IMR-90 (cell line): ENCODE measurements at regions of chr5 and their contacts with region 1.

Region 1: DNA sequence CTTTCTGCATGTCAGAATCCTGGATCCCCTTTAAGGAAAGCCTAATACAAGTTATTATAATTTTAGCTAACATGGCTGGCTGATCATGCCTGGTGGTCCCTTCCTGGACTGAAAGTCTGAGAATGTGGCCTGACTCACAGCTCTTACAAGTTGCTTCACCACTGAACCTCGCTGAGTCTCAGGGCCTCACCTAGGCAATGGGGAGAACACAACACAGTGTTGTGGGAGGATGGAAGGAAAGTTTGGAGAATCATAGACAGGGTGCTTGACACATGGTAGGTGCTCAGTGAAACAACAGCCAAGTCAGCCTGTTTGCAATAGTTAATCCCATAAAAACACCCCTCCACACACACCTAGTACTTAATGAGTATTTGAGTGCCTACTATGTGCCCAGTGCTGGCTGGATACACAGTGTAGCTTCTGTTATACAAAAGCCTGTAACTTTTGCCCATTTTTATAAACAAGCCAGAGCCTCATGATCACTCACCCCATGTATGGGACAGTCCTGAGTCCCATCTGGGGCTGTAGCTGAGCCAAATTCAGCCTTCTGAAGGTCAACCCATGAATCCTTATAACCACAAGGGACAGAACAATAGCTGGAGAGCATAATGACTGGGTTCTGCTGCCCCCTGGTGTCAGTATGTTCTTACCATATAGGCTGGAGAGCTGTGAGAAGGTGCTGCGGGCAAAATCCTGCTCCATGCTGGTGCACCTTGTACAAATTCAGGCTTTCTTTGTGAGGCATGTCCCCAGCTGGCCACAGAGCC is 3.9 kb downstream of the ACSL6 start:
- DNase-seq: peak; percentile 78
- ATAC-seq: peak; percentile 72
- H3K4me3 ChIP-seq: no peak overlapping the region
- H3K27ac ChIP-seq: no peak overlapping the region
- H3K4me1 ChIP-seq: no peaks in the 10 kb centered on the region
- H3K27me3 ChIP-seq: peaks cover 42% of the 10 kb centered on the region
- CTCF ChIP-seq: peak; percentile 71
- POLR2A ChIP-seq: no peak
- RAD21 ChIP-seq: peak; percentile 83

Region 2: DNA sequence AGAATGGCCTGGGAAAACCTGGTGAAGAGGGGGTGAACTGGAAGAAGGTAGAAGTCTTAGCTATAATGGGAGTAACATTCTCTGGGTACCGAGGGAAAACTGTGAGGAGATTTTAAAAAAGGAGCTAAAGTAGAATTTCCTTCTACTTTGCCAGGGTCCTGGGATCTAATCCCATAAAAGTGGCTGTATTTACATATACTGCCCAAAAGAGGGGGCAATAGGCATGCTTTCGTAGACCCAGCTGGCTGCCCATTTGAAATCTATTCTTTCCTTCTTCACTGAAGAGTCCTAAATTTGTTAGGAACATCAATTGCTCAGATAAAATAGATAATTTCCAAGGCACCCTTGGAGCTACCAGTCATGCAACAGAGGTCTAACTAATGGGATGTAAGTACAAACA is 584.5 kb before region 1 on chr5:
- CTCF ChIA-PET with region 1: interaction called, 5 read pairs
- POLR2A ChIA-PET with region 1: no interaction called
- dilution Hi-C with region 1: no loop called
- in situ Hi-C with region 1: loop called (anchors 5 kb)
- intact Hi-C with region 1: loop called (anchors 1 kb)
- DNase-seq: peak; percentile 27
- ATAC-seq: peak; percentile 79
- H3K4me3 ChIP-seq: no peak overlapping the region
- H3K27ac ChIP-seq: no peak overlapping the region
- H3K4me1 ChIP-seq: no peaks in the 10 kb centered on the region
- H3K27me3 ChIP-seq: no peaks in the 10 kb centered on the region
- CTCF ChIP-seq: peak; percentile 54
- POLR2A ChIP-seq: no peak
- RAD21 ChIP-seq: peak; percentile 71

Region 3: DNA sequence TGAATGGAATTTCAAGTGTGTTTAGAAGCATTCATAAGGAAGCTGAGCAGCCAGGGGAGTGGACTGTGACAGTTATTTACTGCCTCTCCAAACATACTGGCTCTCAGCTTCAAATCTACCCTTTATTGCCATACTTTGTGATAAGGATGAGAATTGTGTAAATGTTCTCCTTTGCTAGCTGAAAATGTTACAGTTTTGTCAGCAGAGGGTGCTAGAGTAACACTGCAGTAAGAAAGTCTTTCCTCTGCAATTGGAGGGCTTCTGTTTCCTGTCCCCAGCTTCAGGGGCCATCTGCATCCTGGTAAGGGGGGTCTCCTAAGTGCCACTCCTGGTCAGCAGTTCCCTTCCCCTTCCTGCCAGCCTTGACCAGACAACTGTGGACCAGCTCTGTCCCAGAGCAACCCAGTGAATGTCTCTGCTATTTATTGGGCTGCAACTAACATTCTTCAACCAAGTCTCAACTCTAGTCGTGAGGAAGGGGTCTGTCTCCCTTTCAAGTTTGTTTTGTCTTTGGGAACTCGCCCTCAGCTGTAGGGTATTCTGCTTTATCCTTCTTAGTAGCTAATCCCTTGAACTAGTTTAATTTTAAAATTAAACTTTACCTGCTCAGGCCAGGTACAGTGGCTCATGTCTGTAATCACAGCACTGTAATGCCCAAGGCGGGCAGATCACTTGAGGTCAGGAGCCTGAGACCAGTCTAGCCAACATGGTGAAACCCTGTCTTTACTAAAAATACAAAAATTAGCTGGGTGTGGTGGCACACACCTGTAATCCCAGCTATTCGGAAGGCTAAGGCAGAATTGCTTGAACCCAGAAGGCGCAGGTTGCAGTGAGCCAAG is 417.9 kb before region 1 on chr5:
- CTCF ChIA-PET with region 1: interaction called, 35 read pairs
- POLR2A ChIA-PET with region 1: no interaction called
- dilution Hi-C with region 1: no loop called
- in situ Hi-C with region 1: loop called (anchors 5 kb)
- intact Hi-C with region 1: loop called (anchors 1 kb)
- DNase-seq: peak; percentile 74
- ATAC-seq: peak; percentile 87
- H3K4me3 ChIP-seq: no peak overlapping the region
- H3K27ac ChIP-seq: no peak overlapping the region
- H3K4me1 ChIP-seq: peaks cover 6% of the 10 kb centered on the region
- H3K27me3 ChIP-seq: no peaks in the 10 kb centered on the region
- CTCF ChIP-seq: peak; percentile 90
- POLR2A ChIP-seq: peak; percentile 41; the same call in 1 of the 2 replicates
- RAD21 ChIP-seq: peak; percentile 93

Region 4: DNA sequence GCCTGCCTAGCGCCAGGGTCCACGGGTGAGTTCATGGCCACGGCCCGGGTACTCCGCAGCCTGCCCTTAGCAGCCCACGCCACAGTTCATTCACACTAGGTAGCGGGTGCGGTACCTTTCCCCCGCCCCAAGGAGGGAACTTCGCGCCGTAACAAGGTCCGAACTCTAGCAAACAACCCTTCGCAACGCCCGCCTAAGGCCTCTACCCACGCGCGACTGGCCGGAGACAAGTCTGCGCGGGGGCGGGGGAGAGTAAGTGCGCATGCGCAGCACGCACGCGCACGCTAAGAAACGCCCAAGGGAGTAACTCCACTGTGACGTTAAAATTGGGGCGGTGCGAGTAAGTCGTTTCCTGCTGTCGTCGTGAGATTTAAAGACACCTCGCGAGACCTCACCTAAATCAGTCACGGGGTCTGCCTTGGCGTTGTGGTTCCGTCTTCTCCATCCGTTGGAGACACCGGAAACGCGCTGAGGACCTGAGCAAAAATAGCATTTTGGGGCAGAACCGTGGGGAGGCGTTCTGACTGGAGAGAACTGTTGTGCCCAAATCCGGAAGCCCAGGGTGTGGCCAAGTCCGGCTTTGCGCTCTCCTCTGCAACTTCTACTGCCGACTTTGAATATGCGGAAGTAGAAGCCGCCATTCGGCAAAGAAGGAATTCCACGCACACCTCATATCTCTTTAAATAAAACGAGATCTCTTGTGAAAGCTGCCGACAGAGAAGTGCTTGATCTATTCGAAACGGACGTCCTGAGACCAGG is 372.4 kb before region 1 on chr5 and contains the start of gene RAPGEF6:
- CTCF ChIA-PET with region 1: no interaction called
- POLR2A ChIA-PET with region 1: no interaction called
- dilution Hi-C with region 1: no loop called
- in situ Hi-C with region 1: no loop called
- intact Hi-C with region 1: loop called (anchors 1 kb)
- DNase-seq: peak; percentile 100
- ATAC-seq: peak; percentile 92
- H3K4me3 ChIP-seq: peak within 1 kb of the TSS; percentile 66
- H3K27ac ChIP-seq: peak within 1 kb of the TSS; percentile 93
- H3K4me1 ChIP-seq: peaks cover 5% of the 10 kb centered on the region
- H3K27me3 ChIP-seq: no peaks in the 10 kb centered on the region
- CTCF ChIP-seq: no peak
- POLR2A ChIP-seq: peak; percentile 87
- RAD21 ChIP-seq: no peak
- total RNA-seq, gene RAPGEF6: 18.8 and 30.3 TPM in 2 replicates

Region 5: GRCh38 chr5:131810510-131811249 is 196.9 kb before region 1 on chr5:
- CTCF ChIA-PET with region 1: interaction called, 16 read pairs
- POLR2A ChIA-PET with region 1: no interaction called
- dilution Hi-C with region 1: no loop called
- in situ Hi-C with region 1: loop called (anchors 10 kb)
- intact Hi-C with region 1: loop called (anchors 1 kb)
- DNase-seq: peak; percentile 41
- ATAC-seq: peak; percentile 64
- H3K4me3 ChIP-seq: no peak overlapping the region
- H3K27ac ChIP-seq: no peak overlapping the region
- H3K4me1 ChIP-seq: 0 out of 2 replicates have a peak, but pooled peaks cover 2% of the 10 kb centered on the region
- H3K27me3 ChIP-seq: no peaks in the 10 kb centered on the region
- CTCF ChIP-seq: peak; percentile 48
- POLR2A ChIP-seq: no peak
- RAD21 ChIP-seq: peak; percentile 44

Region 6: GRCh38 chr5:132500931-132501630 is 493.5 kb after region 1 on chr5:
- CTCF ChIA-PET with region 1: no interaction called
- POLR2A ChIA-PET with region 1: no interaction called
- dilution Hi-C with region 1: no loop called
- in situ Hi-C with region 1: no loop called
- intact Hi-C with region 1: no loop called
- DNase-seq: peak; percentile 55
- ATAC-seq: no peak
- H3K4me3 ChIP-seq: no peak overlapping the region
- H3K27ac ChIP-seq: no peak overlapping the region
- H3K4me1 ChIP-seq: peaks cover 35% of the 10 kb centered on the region
- H3K27me3 ChIP-seq: no peaks in the 10 kb centered on the region
- CTCF ChIP-seq: peak; percentile 84
- POLR2A ChIP-seq: peak; percentile 57
- RAD21 ChIP-seq: peak; percentile 88